Colonic mucosa (tissue), 4 donors: ENCODE measurements at regions of chr4 and their contacts with region 1.

Region 1: DNA sequence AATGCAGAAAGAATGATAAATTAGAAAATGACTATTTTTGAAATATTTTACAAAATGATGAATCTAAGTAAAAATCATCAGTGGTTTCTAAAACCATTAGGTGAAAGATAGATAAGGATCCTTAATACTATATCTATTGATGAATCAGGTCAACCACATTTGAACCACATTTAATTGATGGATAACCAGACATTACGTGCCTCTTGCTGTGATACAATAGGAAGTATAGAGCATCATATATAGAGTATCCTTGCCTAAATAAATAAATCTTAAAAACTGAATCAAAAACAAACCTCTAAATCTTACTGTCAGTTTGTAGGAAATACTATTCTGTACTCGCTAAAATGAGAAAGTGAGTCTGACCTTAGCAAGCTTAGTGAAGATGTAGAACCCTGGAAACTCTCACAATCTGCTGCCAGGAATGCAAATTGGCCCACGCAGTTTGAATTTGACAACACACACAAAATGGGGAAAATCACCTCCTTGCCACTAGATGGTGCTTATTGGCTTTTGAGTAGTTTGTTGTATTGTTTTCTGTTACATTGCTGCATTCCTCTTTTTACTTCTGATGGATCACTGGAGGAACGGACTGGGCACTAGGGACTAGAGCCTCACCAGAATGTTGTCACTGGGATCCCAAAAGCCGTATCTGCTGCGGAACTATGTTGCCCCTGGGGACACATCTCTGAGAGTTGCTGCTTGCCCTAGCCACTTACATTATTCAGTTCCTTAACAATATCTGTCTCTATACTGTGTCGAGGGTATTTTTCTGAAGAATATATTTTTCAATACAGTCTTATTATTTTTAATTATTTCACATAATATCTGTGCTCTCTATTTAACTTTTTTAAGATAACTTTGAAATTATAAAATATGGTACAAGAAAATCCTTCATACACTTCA is 25.4 kb upstream of the SLAIN2 start:
- DNase-seq: peak; percentile 46
- H3K4me3 ChIP-seq: no peak overlapping the region
- H3K27ac ChIP-seq: no peak overlapping the region
- H3K4me1 ChIP-seq: no peaks in the 10 kb centered on the region
- H3K27me3 ChIP-seq: no peaks in the 10 kb centered on the region
- CTCF ChIP-seq: peak; percentile 55

Region 2: DNA sequence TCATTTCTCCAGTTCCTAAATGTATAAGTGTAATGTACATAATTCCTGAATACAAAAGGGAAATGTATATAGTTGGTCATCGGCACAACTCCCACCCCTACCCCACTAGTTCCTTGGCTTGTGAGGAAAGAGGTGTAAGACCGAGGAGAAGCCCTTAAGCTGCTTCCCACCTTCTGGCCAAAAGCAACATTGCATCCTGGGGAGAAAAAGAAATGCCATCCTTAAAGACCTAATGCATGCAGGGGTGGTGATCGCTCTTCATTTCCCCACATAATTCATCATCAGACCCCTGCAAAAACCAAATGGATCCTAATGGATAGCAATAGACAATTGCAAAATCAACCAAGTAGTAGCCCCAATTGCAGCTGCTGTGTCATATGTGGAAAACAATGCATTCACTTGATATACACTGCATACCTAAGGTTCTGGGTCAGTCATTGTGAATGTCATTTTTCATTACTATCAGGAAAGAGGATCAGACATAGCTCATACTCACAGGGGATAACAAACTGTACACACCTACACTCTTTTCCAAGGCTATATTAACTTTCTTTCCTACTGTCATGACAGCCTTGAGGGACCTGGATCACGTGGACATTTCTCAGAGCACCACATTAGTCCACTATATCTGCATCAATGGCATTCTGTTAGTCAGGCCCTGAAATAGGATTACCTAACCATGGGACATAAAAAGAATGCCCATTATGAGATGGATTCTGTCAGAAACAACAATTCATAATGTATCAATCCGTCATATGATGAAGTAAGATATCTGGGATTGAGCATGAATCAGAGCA is 369.9 kb before region 1 on chr4:
- intact Hi-C with region 1: no loop called
- DNase-seq: no peak
- H3K4me3 ChIP-seq: no peak overlapping the region
- H3K27ac ChIP-seq: no peak overlapping the region
- H3K4me1 ChIP-seq: no peaks in the 10 kb centered on the region
- H3K27me3 ChIP-seq: no peaks in the 10 kb centered on the region
- CTCF ChIP-seq: no peak

Region 3: GRCh38 chr4:48375651-48376293 is 59.8 kb after region 1 on chr4:
- intact Hi-C with region 1: loop called (anchors 10 kb)
- DNase-seq: peak; percentile 78
- H3K4me3 ChIP-seq: no peak overlapping the region
- H3K27ac ChIP-seq: peak overlapping the region; percentile 79
- H3K4me1 ChIP-seq: no peaks in the 10 kb centered on the region
- H3K27me3 ChIP-seq: no peaks in the 10 kb centered on the region
- CTCF ChIP-seq: no peak

Region 4: GRCh38 chr4:48588230-48589097 is 272.5 kb after region 1 on chr4:
- intact Hi-C with region 1: no loop called
- DNase-seq: no peak
- H3K4me3 ChIP-seq: no peak overlapping the region
- H3K27ac ChIP-seq: no peak overlapping the region
- H3K4me1 ChIP-seq: peaks cover 4% of the 10 kb centered on the region
- H3K27me3 ChIP-seq: no peaks in the 10 kb centered on the region
- CTCF ChIP-seq: no peak